Activated CD4-positive, alpha-beta memory T cell treated with anti-CD3 and anti-CD28 coated beads, Interleukin-2, amount 10 ng/mL, durations not matched to agents 7 days and 5 days (primary cell): ENCODE measurements at regions of chr3 and their contacts with region 1.

Region 1: DNA sequence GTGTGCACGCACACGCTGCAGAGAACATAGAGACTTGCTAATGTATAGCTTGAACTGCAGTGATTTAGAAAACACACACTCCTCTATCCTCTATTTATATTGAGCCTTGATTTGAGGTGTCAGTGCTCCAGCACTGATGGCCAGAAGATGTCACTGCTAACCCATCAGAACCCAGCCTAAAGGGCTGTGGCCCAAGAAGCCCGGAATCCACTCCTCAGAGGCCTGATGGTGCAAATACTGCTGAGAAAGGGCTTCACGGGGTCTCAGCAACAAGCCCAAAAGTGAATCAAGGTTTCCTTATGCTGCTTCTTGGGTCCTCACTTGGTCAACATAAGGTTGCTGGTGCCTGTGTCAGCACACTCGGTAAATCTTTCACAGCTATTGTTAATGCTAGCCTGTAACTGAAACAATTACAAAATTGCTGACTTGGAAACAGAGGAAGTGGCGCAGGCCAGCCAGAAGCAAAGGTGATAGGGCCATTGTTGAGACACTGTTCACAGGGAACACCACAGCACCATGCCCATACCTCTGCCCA is 60.3 kb downstream of the HEG1 start:
- DNase-seq: peak; percentile 65
- H3K4me3 Mint-ChIP-seq: no peak overlapping the region
- H3K27ac Mint-ChIP-seq: peak overlapping the region; percentile 36
- H3K4me1 Mint-ChIP-seq: peaks cover 21% of the 10 kb centered on the region
- H3K27me3 Mint-ChIP-seq: no peaks in the 10 kb centered on the region

Region 2: DNA sequence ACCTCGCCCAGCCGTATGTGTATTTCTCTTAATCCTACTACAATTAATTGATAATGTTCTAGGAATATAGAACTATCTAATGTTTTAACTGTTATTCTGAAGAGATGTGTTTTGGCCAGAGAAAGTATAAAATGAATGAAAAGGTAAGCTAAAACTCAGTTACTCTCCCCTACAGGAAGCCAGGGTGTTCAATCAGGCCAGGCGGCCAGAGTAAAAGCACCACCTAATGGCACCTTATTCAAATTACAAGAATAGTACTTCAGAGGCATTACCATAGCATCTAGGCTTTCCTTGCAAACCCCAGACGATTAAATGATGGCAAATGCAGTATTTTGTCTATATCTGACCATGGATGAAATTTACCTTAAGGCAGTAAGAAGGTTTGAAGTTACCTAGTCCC is 206.7 kb after region 1 on chr3:
- CTCF ChIA-PET with region 1: interaction called, 15 read pairs
- POLR2A ChIA-PET with region 1: interaction called, 3 read pairs
- DNase-seq: peak; percentile 37
- H3K4me3 Mint-ChIP-seq: no peak overlapping the region
- H3K27ac Mint-ChIP-seq: no peak overlapping the region
- H3K4me1 Mint-ChIP-seq: peaks cover 6% of the 10 kb centered on the region
- H3K27me3 Mint-ChIP-seq: peaks cover 32% of the 10 kb centered on the region

Region 3: GRCh38 chr3:125437631-125438435 is 442.3 kb after region 1 on chr3:
- CTCF ChIA-PET with region 1: interaction called, 19 read pairs
- POLR2A ChIA-PET with region 1: no interaction called
- DNase-seq: peak; percentile 63
- H3K4me3 Mint-ChIP-seq: no peak overlapping the region
- H3K27ac Mint-ChIP-seq: no peak overlapping the region
- H3K4me1 Mint-ChIP-seq: peaks cover 9% of the 10 kb centered on the region
- H3K27me3 Mint-ChIP-seq: no peaks in the 10 kb centered on the region